Activated CD4-positive, alpha-beta T cell treated with anti-CD3 and anti-CD28 coated beads, Interleukin-2, amount 10 ng/mL, durations not matched to agents 24 days and 14 days (primary cell): ENCODE measurements at regions of chrX and their contacts with region 1.

Region 1: DNA sequence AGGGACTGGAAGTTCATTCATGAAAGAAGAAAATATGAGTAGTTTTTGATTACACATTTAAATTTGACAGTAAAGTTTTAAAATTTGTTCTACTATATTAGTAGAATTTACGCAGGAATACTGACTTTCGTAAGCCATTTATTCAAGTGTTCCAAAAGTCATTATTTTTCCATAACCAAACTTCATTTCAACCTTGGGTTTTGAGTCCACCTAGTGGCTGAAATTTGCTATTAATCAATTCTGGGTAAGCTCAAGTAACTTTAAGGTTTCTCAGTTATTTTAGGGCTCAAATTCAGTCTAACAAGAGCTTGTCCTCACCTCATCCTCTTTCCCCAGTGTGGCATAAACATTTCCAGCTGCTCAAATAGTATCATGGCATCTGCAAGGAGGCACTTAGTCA is 175.4 kb downstream of the SH3BGRL start:
- DNase-seq: no peak
- H3K4me3 Mint-ChIP-seq: no peak overlapping the region
- H3K27ac Mint-ChIP-seq: no peak overlapping the region
- H3K4me1 Mint-ChIP-seq: no peaks in the 10 kb centered on the region
- H3K27me3 Mint-ChIP-seq: peaks cover 1% of the 10 kb centered on the region

Region 2: GRCh38 chrX:80876877-80877276 is 500.5 kb before region 1 on chrX:
- intact Hi-C with region 1: loop called (anchors 5 kb)
- DNase-seq: no peak
- H3K4me3 Mint-ChIP-seq: no peak overlapping the region
- H3K27ac Mint-ChIP-seq: no peak overlapping the region
- H3K4me1 Mint-ChIP-seq: no peaks in the 10 kb centered on the region
- H3K27me3 Mint-ChIP-seq: no peaks in the 10 kb centered on the region

Region 3: GRCh38 chrX:81174286-81174685 is 203.0 kb before region 1 on chrX:
- intact Hi-C with region 1: loop called (anchors 1 kb)
- DNase-seq: no peak
- H3K4me3 Mint-ChIP-seq: no peak overlapping the region
- H3K27ac Mint-ChIP-seq: no peak overlapping the region
- H3K4me1 Mint-ChIP-seq: no peaks in the 10 kb centered on the region
- H3K27me3 Mint-ChIP-seq: no peaks in the 10 kb centered on the region

Region 4: GRCh38 chrX:81280148-81280547 is 97.2 kb before region 1 on chrX:
- intact Hi-C with region 1: no loop called
- DNase-seq: no peak
- H3K4me3 Mint-ChIP-seq: no peak overlapping the region
- H3K27ac Mint-ChIP-seq: no peak overlapping the region
- H3K4me1 Mint-ChIP-seq: no peaks in the 10 kb centered on the region
- H3K27me3 Mint-ChIP-seq: no peaks in the 10 kb centered on the region